AG04449 (cell line): ENCODE measurements at regions of chr11 and their contacts with region 1.

Region 1: GRCh38 chr11:19951558-19952115 is 208.6 kb downstream of the DBX1 start:
- DNase-seq: no peak
- H3K4me3 ChIP-seq: no peak overlapping the region
- CTCF ChIP-seq: peak; percentile 30

Region 2: DNA sequence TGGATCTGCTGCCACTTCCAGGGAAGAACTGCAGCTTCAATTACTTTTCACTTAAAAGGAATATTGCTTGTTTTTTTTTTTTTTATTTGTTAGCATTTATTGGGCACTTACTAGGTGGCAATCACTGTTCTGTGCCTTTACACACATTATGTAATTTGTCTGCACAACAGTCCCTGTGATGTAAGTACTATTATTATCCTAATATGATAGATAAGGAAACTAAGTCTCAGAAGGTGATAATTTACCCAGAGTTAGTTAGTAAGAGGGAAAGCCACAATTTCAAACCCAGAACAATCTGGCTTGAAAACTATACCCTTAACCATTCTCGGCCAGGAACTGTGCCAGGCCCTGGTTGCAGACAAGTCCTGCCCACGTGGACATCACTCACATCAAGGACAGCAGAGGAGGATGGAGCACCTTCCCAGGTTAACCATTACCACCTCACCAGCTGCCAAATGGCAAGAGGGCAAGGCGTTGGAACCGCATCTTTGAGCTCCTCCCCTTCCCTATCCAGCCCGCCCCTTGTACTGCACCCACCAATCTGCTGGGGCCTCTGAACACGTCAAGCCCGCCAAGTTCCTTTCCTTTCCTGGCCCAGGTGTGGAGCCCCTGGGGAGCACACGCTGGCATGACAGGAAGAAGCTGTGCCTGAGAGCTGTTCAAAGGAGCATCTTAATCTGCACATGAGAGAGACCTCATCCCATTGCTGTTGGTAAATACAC is 160.6 kb before region 1 on chr11:
- CTCF ChIA-PET with region 1: no interaction called
- POLR2A ChIA-PET with region 1: no interaction called
- DNase-seq: no peak
- H3K4me3 ChIP-seq: no peak overlapping the region
- CTCF ChIP-seq: no peak

Region 3: DNA sequence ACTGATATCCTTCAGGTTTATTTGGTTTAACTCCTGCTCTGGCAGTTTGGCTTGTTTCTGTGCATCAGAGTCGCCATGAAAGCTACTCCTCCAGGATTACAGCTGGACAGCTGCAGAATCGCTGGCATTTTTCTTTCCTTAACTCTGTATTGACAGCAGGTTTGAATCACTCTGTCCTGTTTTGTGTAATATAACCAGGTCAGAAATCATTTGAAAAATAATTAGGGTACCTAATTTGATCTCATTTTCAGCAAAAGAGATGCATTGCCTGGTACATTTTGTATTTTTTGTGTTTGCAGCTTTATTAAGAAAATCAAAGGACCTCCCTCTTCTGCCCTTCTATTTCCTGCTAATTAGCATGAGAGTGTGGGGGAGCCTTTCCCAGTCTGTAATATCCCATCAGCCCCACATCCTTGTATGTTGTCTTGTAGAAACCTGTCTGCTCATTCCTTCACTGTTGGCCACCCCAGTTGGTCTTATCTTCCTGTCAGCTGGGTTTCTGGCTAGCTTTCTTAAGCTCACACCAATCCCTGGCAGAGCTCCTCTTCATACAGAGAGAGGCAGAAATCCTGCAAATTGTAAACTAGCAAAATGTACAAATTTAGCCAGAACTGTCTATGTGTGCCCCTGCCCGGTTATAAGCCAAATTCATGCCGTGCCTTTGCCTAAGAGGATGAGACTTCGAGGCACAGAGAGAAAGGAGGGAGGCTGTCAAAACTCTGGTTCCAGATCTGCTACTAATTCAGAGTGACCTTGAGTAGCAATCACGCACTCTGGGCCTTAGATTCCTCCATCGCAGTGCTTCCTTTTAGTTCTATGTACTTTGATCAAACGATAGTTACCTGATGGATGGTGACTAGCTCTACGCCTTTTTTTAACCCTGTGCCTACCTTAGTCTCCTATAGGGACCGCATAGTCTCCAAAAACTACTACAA is 38.4 kb before region 1 on chr11:
- CTCF ChIA-PET with region 1: interaction called, 29 read pairs
- POLR2A ChIA-PET with region 1: no interaction called
- DNase-seq: no peak
- H3K4me3 ChIP-seq: no peak overlapping the region
- CTCF ChIP-seq: no peak

Region 4: DNA sequence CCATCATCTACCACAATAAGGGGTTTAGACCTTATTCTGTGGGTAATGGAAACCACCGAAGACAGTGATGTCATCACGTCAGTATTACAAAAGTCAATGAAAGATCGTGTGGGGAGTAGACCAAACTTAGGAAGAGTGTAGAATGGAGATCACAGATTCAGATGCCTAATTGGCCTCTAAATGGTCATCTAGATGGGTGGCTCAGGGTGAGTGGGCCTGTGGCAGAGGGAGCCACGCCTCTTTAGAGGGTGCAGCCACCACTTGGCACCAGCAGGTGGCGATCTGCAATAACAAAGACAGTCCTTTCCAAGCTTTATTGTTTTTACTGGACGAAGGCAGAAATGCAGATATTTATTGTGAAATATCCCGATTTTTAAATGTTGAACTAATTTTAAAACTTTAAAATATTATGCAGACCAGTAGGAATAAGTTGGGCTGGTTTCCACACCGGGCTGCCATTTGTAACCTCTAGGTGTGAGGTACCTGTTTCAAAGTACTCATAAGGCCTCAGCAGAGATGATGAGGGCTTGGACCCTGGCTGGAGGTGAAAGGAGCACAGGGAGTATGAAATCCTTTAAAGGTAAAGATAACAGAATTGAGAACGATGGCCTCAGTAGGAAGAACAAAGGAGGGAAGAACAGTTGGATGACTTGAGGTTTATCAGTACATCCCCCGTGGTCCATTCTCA is 13.3 kb before region 1 on chr11:
- CTCF ChIA-PET with region 1: interaction called, 119 read pairs
- POLR2A ChIA-PET with region 1: no interaction called
- DNase-seq: no peak
- H3K4me3 ChIP-seq: no peak overlapping the region
- CTCF ChIP-seq: peak; percentile 65

Region 5: DNA sequence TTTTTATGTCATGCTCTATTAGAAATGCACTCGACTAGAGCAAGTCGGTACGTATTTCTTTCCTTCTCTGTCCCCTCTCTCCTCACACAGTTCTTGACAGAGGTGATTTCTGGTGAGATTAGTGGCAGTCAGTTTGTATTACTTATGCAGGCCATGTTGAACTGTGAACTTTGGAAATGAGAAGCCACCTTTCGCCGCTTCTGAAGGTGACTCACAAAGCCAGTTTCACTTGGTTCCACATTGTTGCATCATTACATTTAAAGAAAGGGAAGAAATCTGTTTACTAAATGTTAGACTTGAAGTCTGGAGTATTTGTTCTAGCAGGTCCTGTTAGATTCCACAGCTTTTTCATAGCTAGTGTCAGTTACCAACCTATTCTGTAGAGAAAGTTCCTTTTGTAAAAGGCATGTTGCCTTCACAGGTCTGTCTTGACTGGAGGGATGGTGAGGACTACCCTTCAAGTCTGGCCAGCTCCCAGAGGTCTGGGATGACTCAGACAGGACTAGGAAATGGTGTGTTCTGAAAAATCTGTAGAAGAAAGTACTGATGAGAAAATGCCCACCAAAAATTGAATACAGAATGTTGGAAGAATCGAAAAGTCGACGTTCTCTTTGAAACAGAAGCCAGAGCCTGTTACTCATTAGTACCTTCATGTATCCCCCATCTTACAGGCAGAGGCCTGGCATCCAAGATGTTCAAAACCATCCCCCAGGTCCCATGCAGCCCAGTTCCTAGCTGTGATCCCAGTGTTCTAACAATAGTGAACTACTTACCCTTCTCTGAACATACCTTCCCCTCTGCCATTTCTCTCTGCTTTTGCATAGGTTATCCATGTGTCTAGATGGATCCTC is 27.3 kb after region 1 on chr11:
- CTCF ChIA-PET with region 1: interaction called, 18 read pairs
- POLR2A ChIA-PET with region 1: no interaction called
- DNase-seq: peak; percentile 52
- H3K4me3 ChIP-seq: no peak overlapping the region
- CTCF ChIP-seq: no peak

Region 6: DNA sequence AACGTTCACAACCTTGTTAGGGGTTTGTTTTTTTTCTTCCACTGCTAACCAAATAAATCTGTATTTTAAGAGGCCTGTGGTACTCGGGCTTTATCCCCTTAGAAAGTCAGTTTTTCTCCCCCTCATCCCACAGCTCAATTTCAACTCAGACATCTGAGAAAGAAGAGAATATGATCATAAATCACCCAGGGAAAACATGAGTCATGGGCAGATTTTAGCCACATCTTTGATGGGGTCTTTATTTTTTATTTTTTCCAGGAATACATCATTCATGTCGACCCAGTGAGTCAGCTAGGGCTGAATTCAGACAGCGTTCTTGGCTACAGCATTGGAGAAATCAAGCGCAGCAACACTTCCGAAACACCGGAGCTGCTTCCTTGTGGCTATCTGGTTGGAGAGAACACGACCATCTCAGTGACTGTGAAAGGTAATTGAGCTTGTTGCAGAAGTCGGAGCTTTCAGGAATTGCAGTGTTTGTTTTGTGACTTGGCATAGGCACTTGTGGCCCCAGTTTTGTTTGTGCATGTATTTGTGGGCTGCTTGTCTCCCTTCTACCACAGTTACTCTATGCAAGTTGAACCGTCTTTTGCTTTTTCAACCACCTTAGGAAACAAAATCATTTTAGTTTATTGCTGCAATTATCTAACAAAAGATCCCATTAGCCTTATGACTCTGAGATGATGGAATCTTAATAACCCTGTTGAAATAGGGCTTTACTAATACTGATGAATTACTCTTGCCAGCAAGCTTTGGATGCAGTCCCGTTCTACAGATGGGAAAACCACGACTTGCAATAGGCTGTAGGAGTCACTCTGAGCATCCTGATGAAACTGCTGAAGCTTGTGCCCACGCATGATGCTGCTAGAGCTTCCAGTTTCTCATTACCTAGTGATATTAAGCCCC is 145.9 kb after region 1 on chr11:
- CTCF ChIA-PET with region 1: interaction called, 20 read pairs
- POLR2A ChIA-PET with region 1: interaction called, 5 read pairs
- DNase-seq: peak; percentile 88
- H3K4me3 ChIP-seq: no peak overlapping the region
- CTCF ChIP-seq: no peak

Region 7: GRCh38 chr11:20355221-20356219 is 403.9 kb after region 1 on chr11:
- CTCF ChIA-PET with region 1: interaction called, 31 read pairs
- POLR2A ChIA-PET with region 1: no interaction called
- DNase-seq: no peak
- H3K4me3 ChIP-seq: no peak overlapping the region
- CTCF ChIP-seq: peak; percentile 58